ENCODE measurements at regions of chr7 and their contacts with region 1.

Region 1: GRCh38 chr7:134432296-134433152 is 26.4 kb downstream of the AKR1B1 start:
- DNase-seq: peak; percentile 51 to 84 (median 65)
- H3K4me3 ChIP-seq: peak overlapping the region; percentile 62
- H3K4me3 Mint-ChIP-seq: peak overlapping the region; percentile 78 to 86 (median 85)
- H3K27ac ChIP-seq: no peak overlapping the region
- H3K27ac Mint-ChIP-seq: peak overlapping the region; percentile 64 to 97 (median 88)
- H3K4me1 ChIP-seq: peaks cover 5% of the 10 kb centered on the region
- H3K4me1 Mint-ChIP-seq: peaks cover 11 to 18% (median 17%) of the 10 kb centered on the region in 3 donors
- H3K27me3 ChIP-seq: peaks cover 4% of the 10 kb centered on the region
- H3K27me3 Mint-ChIP-seq: peaks cover 2 to 3% of the 10 kb centered on the region in 2 donors

Region 2: GRCh38 chr7:134414109-134414508 is 18.4 kb before region 1 on chr7:
- CTCF ChIA-PET with region 1: no interaction called
- POLR2A ChIA-PET with region 1: no interaction called
- DNase-seq: no peak
- H3K4me3 ChIP-seq: no peak overlapping the region
- H3K4me3 Mint-ChIP-seq: no peak overlapping the region
- H3K27ac ChIP-seq: no peak overlapping the region
- H3K27ac Mint-ChIP-seq: no peak overlapping the region
- H3K4me1 ChIP-seq: no peaks in the 10 kb centered on the region
- H3K4me1 Mint-ChIP-seq: no peaks in the 10 kb centered on the region
- H3K27me3 ChIP-seq: no peaks in the 10 kb centered on the region
- H3K27me3 Mint-ChIP-seq: peaks cover 6 to 11% of the 10 kb centered on the region in 2 donors

Region 3: DNA sequence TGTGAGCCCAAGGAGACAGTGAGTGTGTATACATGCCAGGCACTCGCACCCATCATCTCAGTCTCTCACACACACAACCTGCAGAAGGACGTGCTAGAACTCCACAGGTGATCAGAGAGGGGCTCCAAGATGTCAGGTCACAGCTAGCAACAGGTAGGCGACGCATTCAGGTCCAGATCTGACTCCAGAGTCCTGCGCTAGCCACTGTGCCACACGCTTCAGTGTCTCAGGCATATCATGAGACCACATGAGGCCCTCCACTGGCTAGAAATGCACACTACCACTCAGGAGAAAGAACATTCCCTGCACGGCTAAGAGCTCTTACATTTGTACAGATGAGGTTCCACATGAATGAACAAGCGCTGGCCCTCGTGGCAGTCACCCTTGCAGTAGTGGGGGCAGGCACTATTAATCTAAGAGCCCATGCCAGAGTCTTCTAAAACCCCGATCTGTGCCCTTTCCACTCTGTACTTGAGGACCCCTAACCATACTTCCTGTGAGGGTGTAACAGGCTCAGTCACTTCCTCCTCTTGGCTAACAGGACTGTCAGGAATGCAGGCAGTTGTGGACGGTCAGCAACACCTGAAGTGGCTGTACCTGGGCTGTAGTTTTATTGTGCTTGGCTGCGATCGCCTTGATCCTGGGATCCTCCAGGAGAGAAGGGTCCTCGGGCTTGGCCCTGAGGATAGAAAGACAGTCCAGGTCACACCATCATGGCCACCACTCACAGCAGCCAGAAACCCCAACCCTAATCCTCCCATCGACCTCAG is 15.0 kb after region 1 on chr7:
- CTCF ChIA-PET with region 1: interaction called, 10 read pairs
- POLR2A ChIA-PET with region 1: no interaction called
- DNase-seq: no peak
- H3K4me3 ChIP-seq: no peak overlapping the region
- H3K4me3 Mint-ChIP-seq: no peak overlapping the region
- H3K27ac ChIP-seq: no peak overlapping the region
- H3K27ac Mint-ChIP-seq: no peak overlapping the region
- H3K4me1 ChIP-seq: no peaks in the 10 kb centered on the region
- H3K4me1 Mint-ChIP-seq: peaks cover 3 to 9% (median 5%) of the 10 kb centered on the region in 3 donors
- H3K27me3 ChIP-seq: no peaks in the 10 kb centered on the region
- H3K27me3 Mint-ChIP-seq: peaks cover 0 to 2% of the 10 kb centered on the region in 2 donors

Region 4: GRCh38 chr7:134458806-134459698 is 26.5 kb after region 1 on chr7 and contains the start of gene AKR1B1:
- CTCF ChIA-PET with region 1: interaction called, 55 read pairs
- POLR2A ChIA-PET with region 1: interaction called, 8 read pairs
- DNase-seq: peak; percentile 74 to 91 (median 86)
- H3K4me3 ChIP-seq: peak within 1 kb of the TSS; percentile 48
- H3K4me3 Mint-ChIP-seq: peak within 1 kb of the TSS; percentile 85 to 94 (median 90)
- H3K27ac ChIP-seq: peak within 1 kb of the TSS; percentile 62
- H3K27ac Mint-ChIP-seq: peak within 1 kb of the TSS; percentile 62 to 93 (median 87)
- H3K4me1 ChIP-seq: peaks cover 26% of the 10 kb centered on the region
- H3K4me1 Mint-ChIP-seq: peaks cover 47 to 54% (median 52%) of the 10 kb centered on the region in 3 donors
- H3K27me3 ChIP-seq: no peaks in the 10 kb centered on the region
- H3K27me3 Mint-ChIP-seq: no peaks in the 10 kb centered on the region
- total RNA-seq, gene AKR1B1: 117 to 120 TPM

Region 5: DNA sequence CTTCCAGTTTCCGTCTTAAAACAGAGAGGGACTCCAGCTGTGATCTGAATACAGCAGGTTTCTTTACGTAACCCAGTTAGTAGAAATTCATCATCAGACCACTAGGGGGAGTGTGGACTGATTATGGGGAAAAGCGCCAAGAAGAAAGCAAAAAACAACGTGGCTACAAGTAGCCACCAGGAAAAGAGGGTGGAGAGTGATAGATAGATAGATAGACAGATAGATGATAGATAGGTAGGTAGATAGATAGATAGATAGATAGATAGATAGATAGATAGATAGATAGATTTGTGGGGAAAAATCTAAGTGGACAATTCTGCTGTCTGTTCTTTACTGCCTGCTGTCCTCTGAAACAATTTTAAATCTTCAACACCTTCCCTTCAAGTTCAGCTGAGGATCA is 82.1 kb after region 1 on chr7:
- CTCF ChIA-PET with region 1: interaction called, 42 read pairs
- POLR2A ChIA-PET with region 1: interaction called, 3 read pairs
- DNase-seq: peak in 2 of 5 donors; percentile 32 to 54
- H3K4me3 ChIP-seq: no peak overlapping the region
- H3K4me3 Mint-ChIP-seq: no peak overlapping the region
- H3K27ac ChIP-seq: no peak overlapping the region
- H3K27ac Mint-ChIP-seq: peak overlapping the region in 1 of 8 donors; percentile 61
- H3K4me1 ChIP-seq: no peaks in the 10 kb centered on the region
- H3K4me1 Mint-ChIP-seq: peaks cover 1 to 5% (median 4%) of the 10 kb centered on the region in 3 donors
- H3K27me3 ChIP-seq: no peaks in the 10 kb centered on the region
- H3K27me3 Mint-ChIP-seq: peaks cover 10 to 28% of the 10 kb centered on the region in 2 donors

Region 6: DNA sequence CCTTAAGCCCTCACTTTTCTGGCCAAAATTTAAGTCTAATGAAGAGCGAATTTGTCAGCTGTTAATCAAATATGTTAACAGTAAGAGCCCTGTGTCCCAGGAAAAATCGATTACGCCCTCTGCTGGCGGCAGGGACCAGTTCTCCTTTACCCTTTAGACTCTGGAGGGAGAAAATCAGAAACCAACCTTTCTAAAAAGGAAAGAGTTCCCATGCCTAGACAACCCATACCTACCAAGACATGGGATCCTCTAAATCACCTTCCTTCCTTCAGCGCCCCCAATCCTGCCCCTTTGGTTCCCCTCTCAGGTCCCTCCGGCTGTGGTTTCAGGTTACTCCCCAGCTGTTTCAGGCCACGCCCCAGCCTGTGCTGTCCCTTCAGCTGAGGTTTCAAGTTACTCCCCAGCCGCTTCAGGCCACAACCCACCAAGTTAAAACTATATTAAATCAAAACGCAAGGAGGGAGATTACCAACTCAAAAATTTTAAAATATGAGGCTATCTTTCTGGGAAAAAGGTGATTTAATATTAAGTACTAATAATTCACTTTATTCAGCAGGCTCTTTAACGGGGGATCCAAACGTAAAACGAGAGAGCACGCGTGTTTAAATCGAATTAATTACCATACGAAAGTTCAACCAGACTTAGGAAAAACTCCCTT is 115.0 kb after region 1 on chr7:
- CTCF ChIA-PET with region 1: interaction called, 72 read pairs
- POLR2A ChIA-PET with region 1: no interaction called
- DNase-seq: peak; percentile 34 to 73 (median 44)
- H3K4me3 ChIP-seq: no peak overlapping the region
- H3K4me3 Mint-ChIP-seq: peak overlapping the region in 2 of 7 donors; percentile 24 to 40
- H3K27ac ChIP-seq: no peak overlapping the region
- H3K27ac Mint-ChIP-seq: no peak overlapping the region
- H3K4me1 ChIP-seq: no peaks in the 10 kb centered on the region
- H3K4me1 Mint-ChIP-seq: peaks cover 0 to 3% (median 0%) of the 10 kb centered on the region in 3 donors
- H3K27me3 ChIP-seq: no peaks in the 10 kb centered on the region
- H3K27me3 Mint-ChIP-seq: peaks cover 24 to 26% of the 10 kb centered on the region in 2 donors

Region 7: GRCh38 chr7:134605973-134606923 is 173.7 kb after region 1 on chr7:
- CTCF ChIA-PET with region 1: interaction called, 15 read pairs
- POLR2A ChIA-PET with region 1: no interaction called
- DNase-seq: peak; percentile 33 to 70 (median 45)
- H3K4me3 ChIP-seq: no peak overlapping the region
- H3K4me3 Mint-ChIP-seq: peak overlapping the region in 5 of 7 donors; percentile 46 to 78 (median 51)
- H3K27ac ChIP-seq: no peak overlapping the region
- H3K27ac Mint-ChIP-seq: peak overlapping the region in 2 of 8 donors; percentile 21 to 40
- H3K4me1 ChIP-seq: no peaks in the 10 kb centered on the region
- H3K4me1 Mint-ChIP-seq: peaks cover 2 to 5% (median 4%) of the 10 kb centered on the region in 3 donors
- H3K27me3 ChIP-seq: no peaks in the 10 kb centered on the region
- H3K27me3 Mint-ChIP-seq: peaks cover 13 to 58% of the 10 kb centered on the region in 2 donors

Measured in CD8-positive, alpha-beta memory T cell (primary cell).